ENCODE measurements at regions of chr13 and their contacts with region 1.

Region 1: DNA sequence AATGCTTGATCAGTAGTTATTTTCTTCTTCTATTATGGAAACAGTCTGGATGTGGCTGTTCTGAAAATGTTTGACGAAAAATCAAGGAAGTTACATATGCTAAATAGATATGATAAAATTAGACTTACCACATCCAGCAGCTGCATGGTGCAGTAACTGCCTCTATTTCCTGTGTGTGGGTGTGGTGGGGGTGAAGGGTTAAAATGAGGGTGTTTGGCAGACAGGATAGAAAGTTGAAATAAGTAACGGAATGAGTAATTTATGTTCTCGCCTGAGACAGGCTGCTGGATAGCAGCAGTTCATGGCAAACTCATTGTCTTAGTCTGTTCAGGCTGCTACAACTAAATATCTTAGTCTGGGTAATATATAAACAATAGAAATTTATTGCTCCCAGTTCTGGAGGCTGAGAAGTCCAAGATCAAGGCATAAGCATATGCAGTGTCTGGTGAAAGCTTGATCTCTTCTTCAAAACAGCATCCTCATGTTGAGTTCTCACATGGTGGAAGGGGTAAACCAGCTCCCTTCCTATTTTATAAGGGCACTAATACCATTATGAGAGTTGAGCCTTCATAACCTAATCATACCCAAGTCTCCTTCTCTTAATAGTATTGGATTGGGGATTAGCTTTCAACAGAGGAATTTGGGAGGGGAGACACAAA is 1248.9 kb downstream of the SLITRK5 start:
- DNase-seq: peak; percentile 70
- ATAC-seq: peak; percentile 97
- H3K4me3 Mint-ChIP-seq: no peak overlapping the region
- H3K27ac Mint-ChIP-seq: no peak overlapping the region
- H3K4me1 Mint-ChIP-seq: peaks cover 17% of the 10 kb centered on the region
- H3K27me3 Mint-ChIP-seq: no peaks in the 10 kb centered on the region

Region 2: GRCh38 chr13:88883741-88884140 is 36.4 kb before region 1 on chr13:
- CTCF ChIA-PET with region 1: no interaction called
- POLR2A ChIA-PET with region 1: no interaction called
- intact Hi-C with region 1: no loop called
- DNase-seq: no peak
- ATAC-seq: no peak
- H3K4me3 Mint-ChIP-seq: no peak overlapping the region
- H3K27ac Mint-ChIP-seq: no peak overlapping the region
- H3K4me1 Mint-ChIP-seq: no peaks in the 10 kb centered on the region
- H3K27me3 Mint-ChIP-seq: no peaks in the 10 kb centered on the region

Region 3: DNA sequence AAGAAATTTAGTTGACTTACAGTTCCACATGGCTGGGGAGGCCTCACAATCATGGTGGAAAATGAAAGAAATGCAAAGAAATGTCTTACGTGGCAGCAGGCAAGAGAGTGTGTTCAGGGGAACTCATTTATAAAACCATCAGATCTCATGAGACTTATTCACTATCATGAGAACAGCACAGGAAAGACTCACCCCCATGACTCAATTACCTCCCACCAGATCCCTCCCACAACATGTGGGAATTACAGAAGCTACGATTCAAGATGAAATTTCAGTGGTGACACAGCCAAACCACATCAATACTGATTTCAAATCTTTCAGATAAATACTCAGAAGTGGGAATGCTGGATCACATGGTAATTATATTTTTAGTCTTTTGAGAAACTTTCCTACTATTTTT is 109.0 kb after region 1 on chr13:
- CTCF ChIA-PET with region 1: no interaction called
- POLR2A ChIA-PET with region 1: no interaction called
- intact Hi-C with region 1: loop called in 1 of 2 experiments (anchors 10 kb)
- DNase-seq: peak; percentile 43
- ATAC-seq: peak; percentile 77
- H3K4me3 Mint-ChIP-seq: no peak overlapping the region
- H3K27ac Mint-ChIP-seq: peak overlapping the region; percentile 38
- H3K4me1 Mint-ChIP-seq: peaks cover 17% of the 10 kb centered on the region
- H3K27me3 Mint-ChIP-seq: no peaks in the 10 kb centered on the region